Psoas muscle (tissue), 8 donors: ENCODE measurements at regions of chr2 and their contacts with region 1.

Region 1: GRCh38 chr2:230758566-230759480 is 46.2 kb downstream of the CAB39 start:
- DNase-seq: no peak
- ATAC-seq: no peak
- H3K4me3 ChIP-seq: no peak overlapping the region
- H3K27ac ChIP-seq: peak overlapping the region; percentile 64
- H3K4me1 ChIP-seq: peaks cover 43% of the 10 kb centered on the region
- H3K27me3 ChIP-seq: no peaks in the 10 kb centered on the region
- CTCF ChIP-seq: no peak

Region 2: DNA sequence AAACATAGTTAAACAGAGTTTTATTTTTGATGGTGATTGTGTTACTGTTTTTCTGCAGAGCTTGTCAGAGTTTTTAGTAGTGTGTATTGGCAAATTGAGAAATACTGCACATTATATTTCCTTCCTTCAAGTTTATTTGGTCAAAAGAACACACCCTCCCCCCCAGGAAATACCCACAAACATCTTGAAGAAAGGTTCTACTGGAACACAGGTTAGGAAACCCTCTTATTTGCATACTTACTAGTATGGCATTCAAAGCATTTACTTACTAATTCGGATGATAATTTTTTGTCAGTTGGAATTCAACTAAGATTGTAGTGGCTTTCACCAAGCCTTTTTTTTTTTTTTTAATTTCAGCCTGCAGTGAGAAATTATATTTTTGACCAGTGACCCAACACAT is 37.1 kb before region 1 on chr2:
- intact Hi-C with region 1: loop called in 1 of 2 experiments (anchors 5 kb)
- DNase-seq: no peak
- ATAC-seq: no peak
- H3K4me3 ChIP-seq: no peak overlapping the region
- H3K27ac ChIP-seq: peak overlapping the region; percentile 37
- H3K4me1 ChIP-seq: peaks cover 60% of the 10 kb centered on the region
- H3K27me3 ChIP-seq: no peaks in the 10 kb centered on the region
- CTCF ChIP-seq: no peak